Activated naive CD4-positive, alpha-beta T cell treated with anti-CD3 and anti-CD28 coated beads, Interleukin-2, amount 10 ng/mL, durations not matched to agents 7 days and 5 days (primary cell): ENCODE measurements at regions of chr1 and their contacts with region 1.

Region 1: DNA sequence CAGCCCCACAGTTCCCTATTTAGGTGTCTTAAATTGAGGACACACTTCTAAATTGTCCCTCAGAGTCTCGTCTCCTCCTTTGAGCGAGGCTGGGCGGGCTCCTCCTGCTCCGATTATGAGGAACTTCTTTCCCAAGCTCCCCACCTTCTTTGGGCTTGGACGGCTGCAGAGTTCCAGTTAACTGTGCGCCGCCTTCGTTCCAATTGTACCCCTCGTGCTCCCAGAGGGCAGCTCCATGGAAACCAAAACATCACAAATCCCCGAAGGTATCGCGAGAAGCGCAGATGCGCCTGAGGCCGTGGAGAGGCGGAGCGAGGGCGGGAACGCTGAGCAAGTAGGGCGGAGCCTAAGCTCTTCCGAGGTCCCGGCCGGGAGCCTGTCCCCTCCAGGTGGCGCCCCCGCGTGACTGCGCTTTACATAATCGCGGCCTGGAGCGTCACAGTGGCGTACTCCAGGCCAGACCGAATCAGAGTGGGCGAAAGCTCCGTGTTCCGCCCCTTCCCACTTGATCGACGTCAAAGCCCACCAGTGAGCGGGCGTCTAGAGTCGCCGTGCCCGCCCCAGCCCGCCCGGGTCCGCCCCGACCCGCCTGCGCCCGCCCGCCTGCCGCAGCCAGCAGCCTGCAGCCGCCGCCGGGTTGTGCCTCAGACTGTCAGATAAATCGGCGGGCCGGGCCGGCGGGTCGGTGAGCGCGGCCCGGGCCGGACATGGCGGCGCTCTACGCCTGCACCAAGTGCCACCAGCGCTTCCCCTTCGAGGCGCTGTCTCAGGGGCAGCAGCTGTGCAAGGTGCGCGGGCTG is at the start of gene FAM76A:
- DNase-seq: peak; percentile 100
- H3K4me3 Mint-ChIP-seq: peak within 1 kb of the TSS; percentile 83
- H3K27ac Mint-ChIP-seq: peak within 1 kb of the TSS; percentile 87
- H3K4me1 Mint-ChIP-seq: peaks cover 26% of the 10 kb centered on the region
- H3K27me3 Mint-ChIP-seq: peaks cover 11% of the 10 kb centered on the region

Region 2: DNA sequence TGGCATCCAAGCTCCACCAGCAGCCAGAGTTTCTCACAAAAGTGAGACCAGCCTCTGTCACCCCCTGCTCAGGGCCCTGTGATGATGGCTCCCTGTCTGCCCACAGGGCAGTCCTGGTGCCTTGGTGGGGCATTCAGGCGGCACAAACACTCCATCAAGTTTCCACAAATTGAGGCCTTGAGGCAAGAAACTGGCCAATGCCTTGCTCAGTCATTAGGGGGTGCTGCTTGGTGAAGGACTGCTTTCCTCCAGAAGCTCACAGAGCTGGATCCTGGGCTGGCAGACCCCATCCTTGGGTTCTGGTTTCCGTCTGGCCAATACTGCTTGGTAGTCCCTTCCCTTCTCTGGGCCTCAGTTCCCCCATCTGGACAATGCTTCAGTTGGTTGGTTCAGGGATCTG is 109.1 kb before region 1 on chr1:
- CTCF ChIA-PET with region 1: no interaction called
- DNase-seq: no peak
- H3K4me3 Mint-ChIP-seq: no peak overlapping the region
- H3K27ac Mint-ChIP-seq: no peak overlapping the region
- H3K4me1 Mint-ChIP-seq: peaks cover 50% of the 10 kb centered on the region
- H3K27me3 Mint-ChIP-seq: peaks cover 6% of the 10 kb centered on the region

Region 3: GRCh38 chr1:27671964-27672749 is 53.4 kb before region 1 on chr1 and contains the start of gene IFI6:
- CTCF ChIA-PET with region 1: interaction called, 12 read pairs
- DNase-seq: peak; percentile 91
- H3K4me3 Mint-ChIP-seq: peak within 1 kb of the TSS; percentile 88
- H3K27ac Mint-ChIP-seq: peak within 1 kb of the TSS; percentile 95
- H3K4me1 Mint-ChIP-seq: peaks cover 43% of the 10 kb centered on the region
- H3K27me3 Mint-ChIP-seq: no peaks in the 10 kb centered on the region

Region 4: DNA sequence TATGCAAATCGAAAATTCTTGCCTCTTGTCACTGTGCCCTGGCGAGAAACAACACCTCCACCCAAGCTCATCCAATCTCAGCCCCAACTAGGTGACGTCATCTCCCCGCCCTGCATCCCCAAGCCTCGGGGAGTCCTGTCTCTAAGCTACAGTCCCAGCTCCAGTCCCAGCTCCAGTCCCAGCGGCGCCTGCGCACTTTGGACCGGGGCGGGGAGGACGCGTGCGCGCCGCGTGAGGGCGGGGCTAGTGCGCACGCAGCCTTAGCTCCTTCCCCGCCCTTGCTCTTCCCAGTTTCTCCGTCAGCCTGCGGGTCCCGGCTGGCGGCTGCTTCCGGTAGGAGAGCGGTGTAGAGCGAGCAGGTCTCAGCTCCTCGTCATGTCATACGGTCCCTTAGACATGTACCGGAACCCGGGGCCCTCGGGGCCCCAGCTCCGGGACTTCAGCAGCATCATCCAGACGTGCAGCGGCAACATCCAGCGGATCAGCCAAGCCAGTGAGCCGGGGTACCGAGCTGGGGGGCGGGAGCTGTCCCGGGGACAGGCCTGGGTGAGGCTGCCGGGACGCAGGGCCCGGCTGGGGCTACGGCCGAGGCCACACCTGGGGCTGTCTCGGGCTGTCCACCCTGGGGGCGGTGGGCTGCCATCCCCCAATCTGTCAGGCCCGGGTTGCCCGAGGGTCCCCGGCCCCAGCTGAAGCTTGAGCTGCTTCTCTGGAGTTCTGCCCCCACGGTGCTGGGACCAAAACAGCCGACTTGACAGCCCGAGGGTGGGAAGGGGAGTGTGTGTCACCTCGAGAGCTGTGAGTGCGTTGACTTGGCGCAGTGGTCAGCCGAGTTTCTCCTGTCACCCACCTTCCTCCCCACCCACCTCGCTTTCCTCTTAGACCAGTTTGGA is 47.6 kb after region 1 on chr1 and contains the start of gene STX12:
- CTCF ChIA-PET with region 1: interaction called, 11 read pairs
- DNase-seq: peak; percentile 100
- H3K4me3 Mint-ChIP-seq: peak within 1 kb of the TSS; percentile 93
- H3K27ac Mint-ChIP-seq: peak within 1 kb of the TSS; percentile 97
- H3K4me1 Mint-ChIP-seq: peaks cover 33% of the 10 kb centered on the region
- H3K27me3 Mint-ChIP-seq: no peaks in the 10 kb centered on the region